ENCODE measurements at regions of chr2 and their contacts with region 1.

Region 1: GRCh38 chr2:218387374-218388194 is 5.5 kb downstream of the SLC11A1 start:
- DNase-seq: peak; percentile 56 to 82 (median 78)
- ATAC-seq: peak; percentile 81 to 92 (median 86)
- H3K4me3 ChIP-seq: peak overlapping the region; percentile 5 to 40 (median 33)
- H3K27ac ChIP-seq: peak overlapping the region; percentile 40 to 75 (median 46)
- H3K4me1 ChIP-seq: peaks cover 0 to 6% (median 0%) of the 10 kb centered on the region in 3 donors
- H3K27me3 ChIP-seq: no peaks in the 10 kb centered on the region
- CTCF ChIP-seq: no peak

Region 2: GRCh38 chr2:218186355-218186766 is 201.2 kb before region 1 on chr2:
- intact Hi-C with region 1: loop called in 1 of 3 experiments (anchors 10 kb)
- DNase-seq: peak; percentile 63 to 81 (median 68)
- ATAC-seq: peak; percentile 95 to 99 (median 98)
- H3K4me3 ChIP-seq: no peak overlapping the region
- H3K27ac ChIP-seq: no peak overlapping the region
- H3K4me1 ChIP-seq: peaks cover 0 to 6% (median 0%) of the 10 kb centered on the region in 3 donors
- H3K27me3 ChIP-seq: no peaks in the 10 kb centered on the region
- CTCF ChIP-seq: peak; percentile 68 to 86 (median 78)

Region 3: DNA sequence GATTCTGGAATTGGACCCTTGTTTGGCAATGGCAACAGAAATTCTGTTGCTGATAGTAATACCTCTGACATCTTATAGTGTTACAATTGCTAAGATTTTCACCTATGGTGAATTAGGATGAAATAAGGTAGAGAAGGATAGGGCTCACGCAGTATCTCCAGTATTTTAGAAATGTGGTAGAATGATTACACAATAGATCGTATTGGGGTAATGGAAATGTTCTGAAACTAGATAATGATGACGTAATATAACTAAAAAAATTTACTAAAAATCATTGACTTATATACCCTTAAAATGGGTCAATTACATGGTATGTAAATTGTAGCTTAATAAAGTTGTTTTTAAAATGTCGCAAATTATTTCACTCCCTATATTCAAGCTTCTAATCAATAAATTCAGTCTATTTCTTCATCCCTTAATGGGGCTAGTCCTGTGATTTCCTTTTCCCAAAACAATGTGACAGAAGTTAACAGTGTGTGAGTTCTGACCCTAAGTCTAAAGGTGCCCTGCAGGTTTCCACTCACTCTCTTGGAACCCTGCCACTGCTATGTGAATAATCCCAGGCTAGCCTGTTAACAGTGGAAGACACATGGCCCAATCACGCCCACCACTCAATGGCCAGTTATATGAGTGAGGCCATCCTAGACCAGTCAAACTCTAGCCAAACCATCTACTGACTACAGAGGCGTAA is 149.4 kb after region 1 on chr2:
- intact Hi-C with region 1: no loop called
- DNase-seq: no peak
- ATAC-seq: no peak
- H3K4me3 ChIP-seq: no peak overlapping the region
- H3K27ac ChIP-seq: no peak overlapping the region
- H3K4me1 ChIP-seq: no peaks in the 10 kb centered on the region
- H3K27me3 ChIP-seq: no peaks in the 10 kb centered on the region
- CTCF ChIP-seq: no peak